Activated T-helper 2 cell treated with anti-CD3 and anti-CD28 coated beads, Interferon-gamma antibody, Interleukin-2, Interleukin-4, amounts not matched to agents 10 μg/mL and 5 μg/mL and 100 μg/mL, durations not matched to agents 14 hours and 24 hours and 36 hours (primary cell): ENCODE measurements at regions of chr3 and their contacts with region 1.

Region 1: DNA sequence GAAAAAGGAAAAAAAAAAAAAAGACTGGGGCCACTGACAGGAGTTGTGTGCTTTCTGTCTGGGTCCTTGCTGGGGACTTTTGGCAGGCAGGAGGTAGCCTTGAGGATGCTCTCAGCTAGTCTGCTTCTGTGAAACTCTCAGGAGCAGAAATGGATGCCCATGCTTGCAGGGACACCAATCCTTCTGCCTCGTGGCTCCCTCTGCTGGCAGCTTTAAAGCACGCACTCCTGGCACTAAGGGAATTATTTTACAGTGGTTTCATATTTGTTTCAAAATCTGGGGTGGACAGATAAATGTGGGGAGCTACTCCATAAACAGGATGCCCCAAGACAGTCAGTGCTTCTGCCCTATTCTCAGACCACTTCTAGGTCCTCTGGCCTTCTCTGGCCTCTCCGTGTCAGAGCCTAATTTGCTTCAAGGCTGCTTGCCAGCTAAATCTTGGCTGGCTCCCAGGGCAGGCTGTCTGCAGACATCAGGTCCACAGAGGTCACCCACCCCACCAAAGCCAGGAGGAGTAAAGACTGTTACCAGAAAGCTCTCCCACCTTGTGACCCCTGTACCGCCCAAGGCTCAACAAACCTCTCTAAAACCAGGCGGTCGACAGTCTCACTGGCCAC is 17.1 kb downstream of the TRAIP start:
- DNase-seq: peak; percentile 66
- H3K4me3 Mint-ChIP-seq: no peak overlapping the region
- H3K27ac Mint-ChIP-seq: no peak overlapping the region
- H3K4me1 Mint-ChIP-seq: peaks cover 1% of the 10 kb centered on the region
- H3K27me3 Mint-ChIP-seq: no peaks in the 10 kb centered on the region

Region 2: DNA sequence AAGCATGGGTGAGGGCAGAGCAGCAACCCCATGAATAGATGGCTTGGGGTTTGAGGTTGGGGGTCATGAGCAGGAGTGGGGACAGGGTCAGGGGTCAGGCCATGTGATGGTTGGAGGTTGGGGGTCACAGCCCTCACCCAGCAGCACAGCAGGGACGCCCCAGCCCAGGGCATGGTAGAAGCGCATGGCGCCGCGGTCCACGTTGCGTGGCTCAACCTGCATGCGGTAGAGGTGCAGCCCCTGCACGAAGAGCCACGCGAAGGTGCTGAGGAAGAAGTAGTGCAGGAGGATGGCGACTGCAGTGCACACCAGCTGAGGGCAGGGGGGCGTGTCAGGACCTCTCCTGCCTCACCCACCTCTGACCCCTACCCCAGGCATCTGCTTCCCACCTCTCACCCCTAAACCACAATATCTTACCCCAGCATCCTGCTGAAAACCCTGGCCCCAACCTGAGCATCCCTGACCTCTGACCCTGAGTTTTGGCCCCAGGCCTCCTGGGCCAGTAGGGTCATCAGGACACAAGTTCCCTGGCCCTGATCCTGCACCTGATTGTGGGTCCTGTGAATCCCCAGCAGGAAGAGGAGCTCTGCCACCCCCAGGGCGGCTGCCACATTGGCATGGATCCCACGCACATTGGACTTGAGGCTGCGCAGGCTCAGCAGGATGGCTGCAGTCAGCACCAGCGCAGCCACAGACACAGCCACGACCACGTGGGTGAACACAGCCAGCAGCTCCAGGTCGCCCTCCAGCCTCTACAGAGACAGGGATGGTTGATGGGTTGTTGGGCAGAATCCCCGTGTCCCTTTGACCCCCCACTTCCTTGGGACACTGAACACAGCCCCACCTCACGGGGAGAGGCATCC is 1194.2 kb before region 1 on chr3:
- intact Hi-C with region 1: no loop called
- DNase-seq: no peak
- H3K4me3 Mint-ChIP-seq: no peak overlapping the region
- H3K27ac Mint-ChIP-seq: no peak overlapping the region
- H3K4me1 Mint-ChIP-seq: no peaks in the 10 kb centered on the region
- H3K27me3 Mint-ChIP-seq: no peaks in the 10 kb centered on the region

Region 3: DNA sequence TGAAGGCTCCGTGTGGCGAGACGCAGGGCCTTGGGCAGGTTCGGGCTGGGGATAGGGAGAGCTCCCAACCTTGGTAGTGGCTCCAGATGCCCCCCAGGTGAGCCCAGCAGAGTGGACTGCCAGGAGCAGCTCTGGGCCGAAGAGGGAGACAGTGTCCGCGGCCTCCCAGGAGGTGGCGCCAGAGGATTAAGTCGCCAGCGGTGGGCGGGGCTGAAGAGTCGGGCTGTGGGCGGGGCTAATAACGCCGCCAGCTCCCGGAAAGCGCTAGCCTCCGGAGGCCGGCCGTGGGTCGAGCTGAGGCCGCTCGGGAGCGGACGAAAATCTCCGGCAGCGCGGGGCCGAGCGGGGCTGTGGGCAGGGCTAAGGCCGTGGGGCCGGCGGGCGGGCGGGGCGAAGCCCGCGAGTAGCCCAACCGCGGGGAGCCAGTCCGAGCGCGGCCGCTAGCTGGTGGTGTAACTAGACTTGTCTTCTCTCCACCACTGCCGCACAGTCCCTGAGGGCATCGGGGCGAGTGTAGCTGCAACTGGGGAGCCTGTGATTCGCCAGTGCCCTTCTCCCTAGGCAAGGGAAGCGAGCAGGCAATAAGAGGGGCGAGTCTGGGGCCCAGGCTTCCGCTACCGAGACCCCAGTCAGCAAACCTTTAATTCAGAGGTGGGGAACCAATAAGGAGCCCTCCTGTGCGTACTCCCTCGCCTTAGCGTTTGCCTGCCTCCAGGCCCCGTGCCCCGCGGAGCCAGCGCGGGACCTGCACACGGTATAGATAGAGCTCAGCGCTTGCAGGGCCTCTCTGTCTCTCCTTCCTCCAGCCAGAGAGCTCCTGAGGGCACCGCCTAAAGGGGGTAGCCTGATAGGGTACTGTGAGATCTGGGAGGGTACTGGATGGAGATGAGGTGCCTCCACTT is 299.4 kb before region 1 on chr3:
- intact Hi-C with region 1: loop called (anchors 1 kb)
- DNase-seq: peak; percentile 86
- H3K4me3 Mint-ChIP-seq: peak overlapping the region; percentile 68
- H3K27ac Mint-ChIP-seq: no peak overlapping the region
- H3K4me1 Mint-ChIP-seq: peaks cover 5% of the 10 kb centered on the region
- H3K27me3 Mint-ChIP-seq: peaks cover 17% of the 10 kb centered on the region

Region 4: DNA sequence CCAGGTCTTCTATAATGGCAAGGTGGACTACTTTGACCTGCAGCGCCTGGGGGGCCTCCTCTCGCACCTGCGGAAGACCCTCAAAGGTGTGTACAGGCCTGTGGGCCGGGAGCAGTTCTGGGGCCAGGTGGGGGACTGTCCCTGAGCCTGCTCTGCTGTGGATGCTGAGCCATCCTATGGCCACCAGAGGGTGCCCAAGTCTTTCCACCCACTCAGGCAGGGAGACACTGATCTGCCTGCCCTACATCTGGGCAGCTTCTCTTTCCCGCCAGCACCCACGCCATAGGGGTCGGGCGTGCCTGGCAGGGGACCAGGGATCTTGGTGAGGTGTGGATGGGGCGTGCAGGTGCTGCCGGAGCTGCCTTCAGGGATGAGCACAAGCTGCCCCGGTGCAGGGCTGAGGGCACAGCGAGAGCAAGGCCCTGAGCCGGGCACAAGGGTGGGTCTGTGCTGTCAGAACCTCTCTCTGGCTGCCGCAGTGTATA is 135.8 kb before region 1 on chr3:
- intact Hi-C with region 1: loop called (anchors 1 kb)
- DNase-seq: peak; percentile 56
- H3K4me3 Mint-ChIP-seq: no peak overlapping the region
- H3K27ac Mint-ChIP-seq: no peak overlapping the region
- H3K4me1 Mint-ChIP-seq: no peaks in the 10 kb centered on the region
- H3K27me3 Mint-ChIP-seq: no peaks in the 10 kb centered on the region

Region 5: DNA sequence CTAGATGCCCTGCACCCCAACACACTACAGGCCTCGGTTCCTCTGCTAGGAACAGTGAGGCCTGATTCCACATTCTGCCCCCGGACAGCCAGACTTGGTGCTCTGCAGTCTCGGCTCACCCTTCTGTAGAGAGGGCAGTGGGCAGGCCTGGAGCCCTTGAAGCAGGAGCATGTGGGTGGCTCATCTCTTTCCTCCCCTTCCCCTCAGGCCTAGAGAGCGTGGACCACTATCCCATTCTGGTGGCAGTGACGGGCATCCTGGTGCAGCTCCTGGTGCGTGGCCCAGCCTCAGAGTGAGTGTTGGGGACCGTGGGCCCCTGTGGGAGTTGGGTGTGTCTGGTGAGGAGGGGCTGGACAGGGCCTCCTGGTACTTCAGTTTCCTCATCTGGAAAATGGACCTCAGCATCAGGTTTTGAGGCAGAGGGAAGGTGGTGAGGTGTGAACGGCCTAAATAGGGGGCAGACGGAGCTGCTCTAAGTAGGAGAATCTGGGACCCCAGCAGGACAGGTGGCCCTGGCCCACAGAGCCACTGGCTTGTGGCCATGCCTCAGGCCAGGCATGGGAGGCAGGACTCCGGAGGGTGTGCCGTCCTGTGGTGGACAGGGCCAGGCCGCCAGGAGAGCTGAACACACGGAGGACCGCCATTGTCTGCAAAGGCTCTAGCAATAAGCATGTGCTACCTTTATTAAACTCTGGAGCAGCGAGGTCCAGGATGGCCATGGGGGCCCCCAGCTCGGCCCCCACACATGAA is 122.9 kb before region 1 on chr3:
- intact Hi-C with region 1: no loop called
- DNase-seq: no peak
- H3K4me3 Mint-ChIP-seq: no peak overlapping the region
- H3K27ac Mint-ChIP-seq: no peak overlapping the region
- H3K4me1 Mint-ChIP-seq: peaks cover 22% of the 10 kb centered on the region
- H3K27me3 Mint-ChIP-seq: no peaks in the 10 kb centered on the region

Region 6: DNA sequence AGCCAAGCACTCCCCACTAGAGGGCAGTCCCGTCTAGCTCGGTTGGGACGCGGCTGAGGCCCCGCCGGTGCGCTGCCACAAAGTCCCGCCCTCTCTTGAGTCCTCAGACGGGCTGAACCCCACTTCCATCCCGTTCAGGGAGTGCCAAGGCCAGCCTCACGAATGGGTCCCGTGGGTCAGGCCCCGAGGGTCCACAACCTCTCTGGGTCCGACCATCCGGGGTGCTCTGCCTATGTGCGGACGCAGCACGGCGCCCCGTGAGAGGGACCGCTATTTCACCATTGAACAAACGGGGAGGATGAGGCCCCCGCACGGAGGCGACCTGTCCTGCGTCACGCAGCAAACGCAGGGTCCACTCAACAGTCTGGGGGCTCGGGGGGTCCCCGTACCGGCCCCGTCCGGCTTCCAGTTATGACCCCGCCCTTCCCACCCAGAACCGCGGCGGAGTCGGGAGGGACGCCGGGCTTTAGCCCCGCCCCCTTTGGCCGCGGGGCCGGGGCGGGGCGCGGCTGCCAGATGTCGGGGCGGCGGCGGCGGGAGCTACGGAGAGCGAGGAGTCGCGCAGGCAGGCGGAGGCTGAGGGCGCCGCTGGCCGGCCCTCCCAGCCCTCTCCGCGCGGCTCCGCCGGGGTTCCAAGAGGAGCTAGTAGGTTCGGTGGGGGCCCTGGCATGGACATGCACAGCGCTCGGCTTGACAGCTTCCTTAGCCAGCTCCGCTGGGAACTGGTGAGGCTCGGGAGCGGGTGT is 36.4 kb before region 1 on chr3 and contains the start of gene INKA1:
- intact Hi-C with region 1: loop called (anchors 1 kb)
- DNase-seq: peak; percentile 83
- H3K4me3 Mint-ChIP-seq: peak within 1 kb of the TSS; percentile 83
- H3K27ac Mint-ChIP-seq: peak within 1 kb of the TSS; percentile 75
- H3K4me1 Mint-ChIP-seq: peaks cover 22% of the 10 kb centered on the region
- H3K27me3 Mint-ChIP-seq: peaks cover 17% of the 10 kb centered on the region
- total RNA-seq, gene INKA1: 1.2 and 2.3 TPM in 2 replicates

Region 7: DNA sequence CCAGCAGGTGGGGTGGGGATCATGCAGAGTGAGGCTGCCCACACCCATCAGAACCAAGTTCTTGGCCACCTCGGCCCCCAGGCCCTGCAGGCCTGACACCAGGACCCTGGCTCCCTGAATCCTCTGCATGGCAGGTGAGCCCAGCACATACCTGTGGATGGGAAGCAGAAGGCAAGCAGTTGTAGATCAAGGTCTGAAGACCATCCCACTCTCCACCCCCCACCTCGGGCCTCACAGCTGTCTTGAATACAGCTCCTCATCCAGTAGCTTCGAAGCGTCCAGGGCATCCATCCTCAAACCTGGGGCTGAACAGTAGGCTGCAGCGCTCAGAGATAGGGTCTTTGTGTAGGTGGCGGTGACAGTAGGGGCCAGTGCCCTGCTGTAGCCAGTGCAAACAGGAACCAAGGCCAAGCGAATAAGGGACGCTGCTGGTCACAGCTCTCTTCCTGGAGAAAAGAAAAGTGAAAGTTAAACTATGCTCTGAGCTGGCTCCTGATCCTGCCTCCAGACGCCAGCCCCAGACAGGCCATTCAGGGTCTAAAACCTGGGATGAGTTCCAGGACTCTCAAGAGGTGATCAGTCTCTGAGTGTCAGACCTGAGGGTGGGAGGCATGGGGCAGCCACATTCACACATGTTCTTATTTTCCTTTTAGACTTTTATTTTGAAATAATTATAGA is 25.7 kb before region 1 on chr3 and contains the start of gene UBA7:
- intact Hi-C with region 1: loop called (anchors 2 kb)
- DNase-seq: peak; percentile 45
- H3K4me3 Mint-ChIP-seq: peak within 1 kb of the TSS; percentile 92
- H3K27ac Mint-ChIP-seq: peak within 1 kb of the TSS; percentile 91
- H3K4me1 Mint-ChIP-seq: peaks cover 23% of the 10 kb centered on the region
- H3K27me3 Mint-ChIP-seq: no peaks in the 10 kb centered on the region
- total RNA-seq, gene UBA7: 92.0 and 95.7 TPM in 2 replicates